ENCODE measurements at regions of chr17 and their contacts with region 1.

Region 1: GRCh38 chr17:18235743-18236256 is 10.4 kb downstream of the LLGL1 start:
- DNase-seq: peak; percentile 75 to 90
- H3K4me3 ChIP-seq: no peak overlapping the region
- H3K27ac ChIP-seq: peak overlapping the region; percentile 46
- H3K4me1 ChIP-seq: peaks cover 17% of the 10 kb centered on the region
- H3K27me3 ChIP-seq: no peaks in the 10 kb centered on the region
- CTCF ChIP-seq: no peak

Region 2: GRCh38 chr17:18070861-18071340 is 164.9 kb before region 1 on chr17:
- CTCF ChIA-PET with region 1: no interaction called
- POLR2A ChIA-PET with region 1: no interaction called
- intact Hi-C with region 1: no loop called
- DNase-seq: no peak
- H3K4me3 ChIP-seq: no peak overlapping the region
- H3K27ac ChIP-seq: no peak overlapping the region
- H3K4me1 ChIP-seq: peaks cover 11% of the 10 kb centered on the region
- H3K27me3 ChIP-seq: no peaks in the 10 kb centered on the region
- CTCF ChIP-seq: no peak

Region 3: GRCh38 chr17:18143044-18143956 is 92.5 kb before region 1 on chr17:
- CTCF ChIA-PET with region 1: no interaction called
- POLR2A ChIA-PET with region 1: no interaction called
- intact Hi-C with region 1: no loop called
- DNase-seq: no peak
- H3K4me3 ChIP-seq: no peak overlapping the region
- H3K27ac ChIP-seq: no peak overlapping the region
- H3K4me1 ChIP-seq: peaks cover 5% of the 10 kb centered on the region; the same call in 1 of the 2 replicates
- H3K27me3 ChIP-seq: no peaks in the 10 kb centered on the region
- CTCF ChIP-seq: peak; percentile 57

Region 4: DNA sequence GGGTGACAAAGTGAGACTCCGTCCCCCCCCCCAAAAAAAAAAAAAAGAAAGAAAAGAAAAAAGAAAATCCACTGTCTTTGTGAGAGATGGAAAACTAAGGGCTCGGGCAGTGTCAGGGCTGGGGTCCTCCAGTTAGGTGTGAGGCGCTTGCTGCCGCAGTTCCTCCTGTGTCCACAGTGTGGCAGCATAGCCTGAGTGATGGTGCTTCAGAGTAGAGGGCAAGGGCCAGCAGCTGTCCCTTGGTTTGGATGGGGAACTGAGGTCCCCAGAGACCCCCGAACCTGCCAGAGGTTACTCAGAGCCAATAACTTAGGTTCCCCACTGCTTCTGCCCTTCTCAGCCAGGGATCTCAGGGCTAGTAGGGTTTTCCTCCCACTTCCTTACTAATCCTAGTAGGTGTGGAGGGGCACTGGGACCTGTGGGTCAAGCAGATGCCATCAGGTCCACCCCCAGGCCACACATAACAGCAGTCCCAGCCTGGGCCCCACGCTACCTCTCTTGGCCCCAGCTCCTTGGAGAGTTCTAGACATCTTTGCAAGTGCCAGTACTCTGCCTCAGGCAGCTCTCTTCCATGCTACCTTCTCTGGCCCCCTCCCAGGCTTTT is 18.3 kb before region 1 on chr17:
- CTCF ChIA-PET with region 1: interaction called, 18 read pairs
- POLR2A ChIA-PET with region 1: no interaction called
- intact Hi-C with region 1: no loop called
- DNase-seq: peak in 1 of 2 experiments; percentile 83
- H3K4me3 ChIP-seq: no peak overlapping the region
- H3K27ac ChIP-seq: no peak overlapping the region
- H3K4me1 ChIP-seq: peaks cover 22% of the 10 kb centered on the region
- H3K27me3 ChIP-seq: no peaks in the 10 kb centered on the region
- CTCF ChIP-seq: peak; percentile 98

Region 5: DNA sequence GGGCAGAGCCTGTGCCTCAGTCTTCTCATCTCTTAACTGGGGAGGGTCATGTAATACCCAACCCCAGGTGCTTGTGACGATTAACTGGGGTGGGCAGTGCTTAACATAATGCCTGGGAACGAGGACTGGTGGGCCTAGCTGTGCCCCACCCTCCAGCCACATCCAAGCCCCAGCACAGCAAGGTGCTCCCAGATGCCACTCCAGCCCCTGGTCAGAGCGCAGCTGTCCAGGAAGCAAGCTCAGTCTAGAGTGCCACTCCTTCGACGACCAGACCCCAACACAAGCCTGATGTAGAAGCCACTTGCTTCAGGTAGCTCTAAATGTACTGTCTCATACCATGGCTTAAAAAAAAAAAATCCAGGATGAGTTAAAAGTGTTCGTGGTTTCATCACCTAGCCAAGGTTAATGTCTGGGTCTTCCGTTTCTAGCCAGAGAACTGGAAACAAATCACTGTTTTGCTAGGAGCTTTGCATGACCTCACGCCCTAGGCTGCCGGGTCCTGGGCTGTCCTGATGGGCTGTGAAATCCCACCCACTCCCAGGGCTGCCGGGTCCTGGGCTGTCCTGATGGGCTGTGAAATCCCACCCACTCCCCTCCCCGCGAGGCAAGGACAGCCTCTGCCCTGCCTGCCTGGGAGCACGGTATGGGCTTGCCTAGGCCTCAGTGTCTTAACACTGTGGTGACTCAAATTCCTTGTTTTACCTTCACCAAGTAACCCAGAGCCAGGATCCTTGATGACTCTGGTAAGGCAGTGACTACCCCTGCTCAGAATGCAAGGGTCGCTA is 32.3 kb after region 1 on chr17:
- CTCF ChIA-PET with region 1: no interaction called
- POLR2A ChIA-PET with region 1: interaction called, 15 read pairs
- intact Hi-C with region 1: no loop called
- DNase-seq: peak in 1 of 2 experiments; percentile 54
- H3K4me3 ChIP-seq: no peak overlapping the region
- H3K27ac ChIP-seq: peak overlapping the region; percentile 60
- H3K4me1 ChIP-seq: peaks cover 15% of the 10 kb centered on the region; the same call in 1 of the 2 replicates
- H3K27me3 ChIP-seq: no peaks in the 10 kb centered on the region
- CTCF ChIP-seq: no peak